Heart left ventricle (tissue), 16 donors: ENCODE measurements at regions of chr20 and their contacts with region 1.

Region 1: DNA sequence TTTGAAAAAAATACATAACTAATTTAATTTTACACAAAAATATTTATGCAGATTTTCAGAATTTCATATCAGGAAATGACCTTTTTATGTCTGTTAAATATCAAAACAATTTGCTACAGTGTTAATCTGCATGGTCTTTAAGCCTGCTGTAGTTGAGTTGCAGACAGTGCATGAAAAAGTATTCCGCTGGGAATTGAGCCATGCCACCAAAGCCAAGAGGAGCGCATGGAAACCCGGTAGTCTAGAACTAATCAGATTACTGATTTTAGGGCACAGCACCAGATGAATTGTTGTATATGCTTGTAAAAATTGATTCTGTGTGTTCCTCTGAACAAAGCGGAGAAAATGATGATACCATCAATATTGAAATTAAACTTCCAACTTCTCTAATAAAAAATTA is 34.3 kb upstream of the LAMP5 start:
- DNase-seq: no peak
- ATAC-seq: no peak
- H3K4me3 ChIP-seq: no peak overlapping the region
- H3K27ac ChIP-seq: no peak overlapping the region
- H3K4me1 ChIP-seq: peaks cover 0 to 20% (median 0%) of the 10 kb centered on the region in 12 donors
- H3K27me3 ChIP-seq: no peaks in the 10 kb centered on the region
- CTCF ChIP-seq: no peak
- POLR2A ChIP-seq: no peak

Region 2: GRCh38 chr20:8964959-8965562 is 515.0 kb before region 1 on chr20:
- intact Hi-C with region 1: no loop called
- DNase-seq: peak in 2 of 5 donors; percentile 24 to 26
- ATAC-seq: peak in 3 of 4 donors; percentile 26 to 58 (median 37)
- H3K4me3 ChIP-seq: no peak overlapping the region
- H3K27ac ChIP-seq: peak overlapping the region in 4 of 12 donors; percentile 1 to 42 (median 11)
- H3K4me1 ChIP-seq: peaks cover 0 to 31% (median 12%) of the 10 kb centered on the region in 12 donors
- H3K27me3 ChIP-seq: no peaks in the 10 kb centered on the region
- CTCF ChIP-seq: no peak
- POLR2A ChIP-seq: no peak

Region 3: DNA sequence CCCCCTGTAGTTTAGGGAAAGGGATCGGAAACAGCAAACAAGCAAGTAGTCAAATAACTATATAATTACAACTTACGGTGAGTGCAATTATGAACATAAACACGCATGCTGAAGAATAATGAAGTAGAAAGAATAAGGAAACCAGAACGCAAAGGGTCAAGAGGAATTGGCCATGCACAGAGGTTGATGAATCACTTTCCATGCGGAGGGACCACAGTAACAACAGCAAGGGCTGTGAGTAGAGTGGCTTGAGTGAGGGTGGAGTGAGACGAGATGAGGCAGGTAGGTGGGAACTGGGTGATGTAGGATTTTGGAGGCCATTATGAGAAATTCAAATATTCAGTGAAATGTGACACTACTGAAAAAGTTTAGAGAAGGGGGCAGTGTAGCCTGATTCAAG is 77.9 kb before region 1 on chr20:
- intact Hi-C with region 1: loop called in 1 of 10 experiments (anchors 2 kb)
- DNase-seq: no peak
- ATAC-seq: no peak
- H3K4me3 ChIP-seq: no peak overlapping the region
- H3K27ac ChIP-seq: no peak overlapping the region
- H3K4me1 ChIP-seq: peaks cover 0 to 12% (median 4%) of the 10 kb centered on the region in 12 donors
- H3K27me3 ChIP-seq: no peaks in the 10 kb centered on the region
- CTCF ChIP-seq: no peak
- POLR2A ChIP-seq: no peak